Naive thymus-derived CD4-positive, alpha-beta T cell (primary cell): ENCODE measurements at regions of chr2 and their contacts with region 1.

Region 1: GRCh38 chr2:179031731-179032408 is 18.1 kb downstream of the CCDC141 start:
- DNase-seq: peak in 8 of 9 donors; percentile 29 to 77 (median 67)
- ATAC-seq: peak; percentile 92
- H3K4me3 ChIP-seq: peak overlapping the region; percentile 40
- H3K4me3 Mint-ChIP-seq: peak overlapping the region; percentile 71 to 87 (median 84)
- H3K27ac ChIP-seq: peak overlapping the region; percentile 80
- H3K27ac Mint-ChIP-seq: peak overlapping the region; percentile 93 to 99 (median 98)
- H3K4me1 ChIP-seq: peaks cover 0 to 15% of the 10 kb centered on the region in 2 donors
- H3K4me1 Mint-ChIP-seq: peaks cover 13 to 76% (median 46%) of the 10 kb centered on the region in 7 donors
- H3K27me3 ChIP-seq: no peaks in the 10 kb centered on the region
- H3K27me3 Mint-ChIP-seq: no peaks in the 10 kb centered on the region

Region 2: GRCh38 chr2:178522950-178523595 is 508.8 kb before region 1 on chr2:
- CTCF ChIA-PET with region 1: no interaction called
- POLR2A ChIA-PET with region 1: no interaction called
- intact Hi-C with region 1: loop called in 1 of 2 experiments (anchors 10 kb)
- DNase-seq: peak; percentile 65 to 85 (median 80)
- ATAC-seq: peak; percentile 100
- H3K4me3 ChIP-seq: peak overlapping the region; percentile 93
- H3K4me3 Mint-ChIP-seq: peak overlapping the region; percentile 84 to 96 (median 94)
- H3K27ac ChIP-seq: peak overlapping the region; percentile 75
- H3K27ac Mint-ChIP-seq: peak overlapping the region; percentile 80 to 96 (median 91)
- H3K4me1 ChIP-seq: peaks cover 7 to 10% of the 10 kb centered on the region in 2 donors
- H3K4me1 Mint-ChIP-seq: peaks cover 14 to 58% (median 22%) of the 10 kb centered on the region in 7 donors
- H3K27me3 ChIP-seq: no peaks in the 10 kb centered on the region
- H3K27me3 Mint-ChIP-seq: no peaks in the 10 kb centered on the region

Region 3: GRCh38 chr2:179020156-179020750 is 11.6 kb before region 1 on chr2:
- CTCF ChIA-PET with region 1: interaction called, 9 read pairs
- POLR2A ChIA-PET with region 1: interaction called, 4 read pairs
- intact Hi-C with region 1: loop called in 1 of 2 experiments (anchors 2 kb)
- DNase-seq: peak in 7 of 9 donors; percentile 17 to 44 (median 34)
- ATAC-seq: peak; percentile 80
- H3K4me3 ChIP-seq: no peak overlapping the region
- H3K4me3 Mint-ChIP-seq: no peak overlapping the region
- H3K27ac ChIP-seq: no peak overlapping the region
- H3K27ac Mint-ChIP-seq: no peak overlapping the region
- H3K4me1 ChIP-seq: peaks cover 0 to 10% of the 10 kb centered on the region in 2 donors
- H3K4me1 Mint-ChIP-seq: peaks cover 7 to 37% (median 27%) of the 10 kb centered on the region in 7 donors
- H3K27me3 ChIP-seq: no peaks in the 10 kb centered on the region
- H3K27me3 Mint-ChIP-seq: no peaks in the 10 kb centered on the region

Region 4: DNA sequence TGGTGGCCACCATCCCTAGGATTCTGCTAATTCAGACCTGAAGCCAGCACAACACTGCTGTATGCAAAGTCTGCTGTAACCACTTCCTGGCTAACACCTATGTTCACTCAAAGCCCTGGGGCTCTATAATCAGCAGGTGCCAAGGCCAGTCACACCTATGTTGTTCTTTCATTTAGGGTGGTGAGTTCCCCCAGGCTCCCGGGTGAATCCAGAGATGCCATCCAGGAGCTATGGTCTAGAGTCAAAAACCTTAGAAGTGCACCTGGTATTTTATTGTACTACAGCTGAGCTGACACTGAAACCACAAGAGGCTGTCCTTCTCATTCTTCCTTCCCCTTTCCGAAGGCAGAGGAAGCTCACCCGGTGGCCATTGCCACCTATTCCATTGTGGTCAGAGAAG is 64.2 kb after region 1 on chr2:
- CTCF ChIA-PET with region 1: no interaction called
- POLR2A ChIA-PET with region 1: no interaction called
- intact Hi-C with region 1: loop called in 1 of 2 experiments (anchors 5 kb)
- DNase-seq: peak in 6 of 9 donors; percentile 8 to 33 (median 25)
- ATAC-seq: peak; percentile 65
- H3K4me3 ChIP-seq: peak overlapping the region; percentile 27
- H3K4me3 Mint-ChIP-seq: peak overlapping the region; percentile 3 to 64 (median 26)
- H3K27ac ChIP-seq: no peak overlapping the region
- H3K27ac Mint-ChIP-seq: peak overlapping the region in 8 of 9 donors; percentile 3 to 77 (median 31)
- H3K4me1 ChIP-seq: peaks cover 9 to 14% of the 10 kb centered on the region in 2 donors
- H3K4me1 Mint-ChIP-seq: peaks cover 7 to 34% (median 21%) of the 10 kb centered on the region in 7 donors
- H3K27me3 ChIP-seq: no peaks in the 10 kb centered on the region
- H3K27me3 Mint-ChIP-seq: no peaks in the 10 kb centered on the region

Region 5: DNA sequence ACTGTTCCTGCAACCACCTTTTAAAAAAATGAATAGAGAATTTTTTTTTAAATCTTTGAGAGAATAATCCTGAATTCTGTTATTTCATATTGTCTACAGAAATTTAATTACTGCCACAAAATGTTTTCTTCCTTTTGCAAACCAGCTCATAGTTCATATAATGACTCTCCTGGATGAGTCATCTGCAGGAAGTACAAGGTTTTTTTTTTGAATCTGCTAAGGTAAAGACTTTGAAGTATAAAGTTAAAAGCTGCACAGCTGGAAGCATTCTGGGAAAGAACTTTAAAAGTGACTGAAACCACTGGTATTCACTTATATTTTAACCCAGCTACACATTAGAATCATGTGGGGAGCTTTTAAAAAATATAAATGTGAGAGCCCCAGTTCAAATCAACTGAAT is 207.3 kb after region 1 on chr2:
- CTCF ChIA-PET with region 1: no interaction called
- POLR2A ChIA-PET with region 1: no interaction called
- intact Hi-C with region 1: loop called in 1 of 2 experiments (anchors 10 kb)
- DNase-seq: peak in 7 of 9 donors; percentile 0 to 32 (median 22)
- ATAC-seq: peak; percentile 48
- H3K4me3 ChIP-seq: no peak overlapping the region
- H3K4me3 Mint-ChIP-seq: peak overlapping the region in 3 of 10 donors; percentile 10 to 39 (median 18)
- H3K27ac ChIP-seq: no peak overlapping the region
- H3K27ac Mint-ChIP-seq: peak overlapping the region in 2 of 9 donors; percentile 35 to 73
- H3K4me1 ChIP-seq: peaks cover 0 to 4% of the 10 kb centered on the region in 2 donors
- H3K4me1 Mint-ChIP-seq: peaks cover 10 to 49% (median 21%) of the 10 kb centered on the region in 7 donors
- H3K27me3 ChIP-seq: no peaks in the 10 kb centered on the region
- H3K27me3 Mint-ChIP-seq: peaks cover 0 to 10% (median 5%) of the 10 kb centered on the region in 5 donors